Stomach (tissue), 19 donors: ENCODE measurements at regions of chrX and their contacts with region 1.

Region 1: GRCh38 chrX:15468036-15468435 is 25.1 kb downstream of the PIR start:
- DNase-seq: peak in 1 of 2 donors; percentile 59
- H3K4me3 ChIP-seq: no peak overlapping the region
- H3K27ac ChIP-seq: peak overlapping the region in 1 of 5 donors; percentile 17
- H3K4me1 ChIP-seq: no peaks in the 10 kb centered on the region
- H3K27me3 ChIP-seq: no peaks in the 10 kb centered on the region
- CTCF ChIP-seq: peak in 4 of 7 experiments; percentile 18 to 44 (median 30)
- EP300 ChIP-seq: no peak
- POLR2A ChIP-seq: no peak

Region 2: GRCh38 chrX:15335135-15336022 is 132.7 kb before region 1 on chrX and contains the start of gene PIGA:
- intact Hi-C with region 1: no loop called
- DNase-seq: peak; percentile 94 to 98
- H3K4me3 ChIP-seq: peak within 1 kb of the TSS; percentile 54 to 70 (median 61)
- H3K27ac ChIP-seq: peak within 1 kb of the TSS; percentile 90 to 95 (median 91)
- H3K4me1 ChIP-seq: peaks cover 0 to 19% (median 6%) of the 10 kb centered on the region in 4 donors
- H3K27me3 ChIP-seq: no peaks in the 10 kb centered on the region
- CTCF ChIP-seq: no peak
- EP300 ChIP-seq: no peak
- POLR2A ChIP-seq: peak in 2 of 4 donors; percentile 85 to 95
- total RNA-seq, gene PIGA: 0.58 to 59.7 (median 17.8) TPM

Region 3: DNA sequence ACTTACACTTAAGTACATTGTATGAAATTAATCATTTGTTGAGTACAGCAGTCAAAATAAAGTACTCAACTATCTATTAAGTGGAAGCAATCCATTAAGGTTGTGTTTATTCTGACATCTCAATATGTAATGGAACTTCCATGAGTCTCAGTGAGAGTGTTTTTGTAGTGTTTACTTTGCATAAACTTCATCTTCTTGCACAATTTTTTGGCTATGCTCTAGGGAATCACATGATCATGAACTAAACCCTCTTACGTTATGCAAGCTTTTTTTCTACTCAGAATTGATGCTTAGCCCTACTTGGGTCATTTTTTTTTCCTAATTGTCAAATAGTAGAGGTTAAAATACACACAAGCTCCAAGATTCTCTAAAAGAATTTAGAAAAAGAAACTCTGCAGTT is 111.6 kb before region 1 on chrX:
- intact Hi-C with region 1: loop called (anchors 10 kb)
- DNase-seq: peak in 1 of 2 donors; percentile 67
- H3K4me3 ChIP-seq: no peak overlapping the region
- H3K27ac ChIP-seq: no peak overlapping the region
- H3K4me1 ChIP-seq: no peaks in the 10 kb centered on the region
- H3K27me3 ChIP-seq: no peaks in the 10 kb centered on the region
- CTCF ChIP-seq: no peak
- EP300 ChIP-seq: no peak
- POLR2A ChIP-seq: no peak

Region 4: DNA sequence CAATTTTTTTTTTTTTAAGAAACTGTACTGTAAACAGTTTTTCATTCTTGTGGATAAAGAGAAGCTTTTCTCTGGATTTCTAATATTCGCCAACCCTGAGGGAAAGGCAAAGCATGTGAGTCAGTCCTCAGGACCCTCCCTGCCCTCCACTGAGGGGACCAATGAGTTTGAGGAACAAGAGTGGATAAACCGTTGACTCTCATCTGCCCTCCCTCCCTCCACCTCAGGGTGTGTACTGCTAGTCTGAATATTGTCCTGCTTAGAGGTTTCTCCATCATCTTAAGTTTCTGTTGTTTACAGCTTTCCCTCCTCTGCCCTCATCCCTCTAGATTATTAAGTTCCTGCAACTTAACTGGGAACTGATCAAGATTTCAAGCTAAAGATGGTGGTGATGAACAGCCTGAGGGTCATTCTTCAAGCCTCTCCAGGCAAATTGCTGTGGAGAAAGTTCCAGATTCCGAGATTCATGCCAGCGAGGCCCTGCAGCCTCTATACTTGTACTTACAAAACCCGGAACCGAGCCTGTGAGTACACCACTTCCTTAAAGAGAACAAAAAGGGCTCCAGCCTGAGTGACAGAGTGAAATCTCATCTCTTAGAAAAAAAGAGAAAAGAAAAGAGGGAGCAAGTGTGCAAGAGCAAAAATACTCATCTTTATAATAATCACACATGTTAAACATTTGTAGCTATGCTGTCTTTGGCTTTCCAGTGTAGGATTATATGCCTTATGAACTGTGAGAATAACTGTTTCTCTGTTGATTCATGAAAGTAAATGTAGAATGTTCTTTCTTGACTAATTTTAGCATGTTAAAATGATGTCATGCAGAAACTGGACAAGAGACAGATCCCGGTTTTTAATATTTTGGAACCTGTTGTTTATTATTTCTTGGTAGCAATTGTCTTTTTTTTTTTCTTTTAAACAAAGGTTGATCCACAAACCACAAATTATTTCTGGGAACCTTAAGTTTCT is 281.9 kb after region 1 on chrX:
- intact Hi-C with region 1: no loop called
- DNase-seq: peak; percentile 31 to 36
- H3K4me3 ChIP-seq: no peak overlapping the region
- H3K27ac ChIP-seq: peak overlapping the region; percentile 70 to 79 (median 75)
- H3K4me1 ChIP-seq: peaks cover 0 to 25% (median 19%) of the 10 kb centered on the region in 4 donors
- H3K27me3 ChIP-seq: no peaks in the 10 kb centered on the region
- CTCF ChIP-seq: no peak
- EP300 ChIP-seq: no peak
- POLR2A ChIP-seq: no peak